ENCODE measurements at regions of chr1 and their contacts with region 1.

Region 1: DNA sequence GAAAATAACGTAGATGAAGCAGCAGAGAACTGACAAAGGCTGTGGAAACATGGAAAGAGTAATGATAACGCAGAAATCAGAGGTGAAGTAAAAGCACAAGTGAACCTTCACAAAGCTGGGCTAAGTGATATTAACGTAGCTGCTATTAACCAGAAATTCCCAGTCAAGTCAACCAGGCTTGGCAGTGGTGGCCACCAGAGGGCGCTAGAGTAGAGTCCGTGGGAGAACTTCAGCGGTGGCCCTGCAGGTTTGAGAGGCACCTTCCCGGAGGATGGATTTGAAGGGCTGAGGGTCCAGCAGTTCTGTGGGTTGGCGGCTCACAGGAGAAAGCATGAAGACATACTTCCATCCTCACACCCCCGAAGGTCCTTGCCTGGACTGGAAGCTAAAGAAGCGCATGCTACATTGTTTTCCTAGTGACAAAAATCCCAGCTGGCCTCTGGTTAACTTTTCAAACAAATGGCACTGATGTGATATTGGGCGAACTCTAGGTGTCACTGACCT is 81.7 kb upstream of the ZNF648 start:
- H3K4me3 ChIP-seq: no peak overlapping the region
- H3K27ac ChIP-seq: no peak overlapping the region
- H3K4me1 ChIP-seq: no peaks in the 10 kb centered on the region
- CTCF ChIP-seq: peak; percentile 84

Region 2: DNA sequence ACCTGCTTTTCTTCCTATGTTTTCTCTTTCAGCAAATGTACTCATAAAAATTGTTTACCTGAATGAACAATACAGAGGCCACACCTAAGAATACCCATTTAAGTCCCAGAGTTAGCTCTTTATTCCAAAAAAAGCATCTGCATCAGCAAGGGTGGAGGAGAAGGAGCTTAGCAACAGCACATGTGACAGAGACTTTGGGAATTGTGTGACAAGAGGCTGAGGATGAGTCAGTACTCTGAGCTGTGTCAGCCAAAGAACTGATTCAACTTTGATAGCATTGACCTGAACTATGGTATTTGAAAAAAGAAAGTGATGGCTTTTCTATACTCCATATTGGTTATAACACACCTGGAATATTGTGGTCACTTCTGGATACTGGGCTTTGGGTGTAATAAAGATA is 244.4 kb before region 1 on chr1:
- CTCF ChIA-PET with region 1: no interaction called
- POLR2A ChIA-PET with region 1: no interaction called
- H3K4me3 ChIP-seq: no peak overlapping the region
- H3K27ac ChIP-seq: no peak overlapping the region
- H3K4me1 ChIP-seq: no peaks in the 10 kb centered on the region
- CTCF ChIP-seq: no peak

Region 3: DNA sequence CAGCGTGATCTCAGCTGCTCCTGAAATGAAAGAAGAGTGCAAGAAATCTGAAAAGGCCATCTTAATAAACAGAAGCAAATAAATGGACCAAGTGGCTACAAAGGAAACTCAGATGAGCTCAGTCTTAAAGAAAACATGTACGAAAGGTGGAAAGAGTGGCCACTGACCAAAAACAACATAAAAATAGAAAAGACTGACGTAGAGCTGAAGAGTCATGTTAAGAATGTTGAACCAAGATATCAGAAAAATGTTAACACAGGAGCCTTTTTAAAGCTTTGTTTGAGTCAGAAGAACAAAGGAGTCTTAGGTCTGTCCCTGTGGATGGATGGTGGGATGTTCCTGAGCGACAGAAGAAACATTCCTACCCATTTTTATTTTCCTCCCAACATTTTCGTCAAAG is 50.9 kb before region 1 on chr1:
- CTCF ChIA-PET with region 1: interaction called, 12 read pairs
- POLR2A ChIA-PET with region 1: no interaction called
- H3K4me3 ChIP-seq: no peak overlapping the region
- H3K27ac ChIP-seq: no peak overlapping the region
- H3K4me1 ChIP-seq: no peaks in the 10 kb centered on the region
- CTCF ChIP-seq: no peak

Region 4: GRCh38 chr1:182122256-182122912 is 20.8 kb before region 1 on chr1:
- CTCF ChIA-PET with region 1: interaction called, 12 read pairs
- POLR2A ChIA-PET with region 1: no interaction called
- H3K4me3 ChIP-seq: no peak overlapping the region
- H3K27ac ChIP-seq: no peak overlapping the region
- H3K4me1 ChIP-seq: peaks cover 6% of the 10 kb centered on the region
- CTCF ChIP-seq: no peak

Region 5: GRCh38 chr1:182198049-182198501 is 54.9 kb after region 1 on chr1:
- CTCF ChIA-PET with region 1: interaction called, 39 read pairs
- POLR2A ChIA-PET with region 1: no interaction called
- H3K4me3 ChIP-seq: no peak overlapping the region
- H3K27ac ChIP-seq: no peak overlapping the region
- H3K4me1 ChIP-seq: no peaks in the 10 kb centered on the region
- CTCF ChIP-seq: no peak

Region 6: DNA sequence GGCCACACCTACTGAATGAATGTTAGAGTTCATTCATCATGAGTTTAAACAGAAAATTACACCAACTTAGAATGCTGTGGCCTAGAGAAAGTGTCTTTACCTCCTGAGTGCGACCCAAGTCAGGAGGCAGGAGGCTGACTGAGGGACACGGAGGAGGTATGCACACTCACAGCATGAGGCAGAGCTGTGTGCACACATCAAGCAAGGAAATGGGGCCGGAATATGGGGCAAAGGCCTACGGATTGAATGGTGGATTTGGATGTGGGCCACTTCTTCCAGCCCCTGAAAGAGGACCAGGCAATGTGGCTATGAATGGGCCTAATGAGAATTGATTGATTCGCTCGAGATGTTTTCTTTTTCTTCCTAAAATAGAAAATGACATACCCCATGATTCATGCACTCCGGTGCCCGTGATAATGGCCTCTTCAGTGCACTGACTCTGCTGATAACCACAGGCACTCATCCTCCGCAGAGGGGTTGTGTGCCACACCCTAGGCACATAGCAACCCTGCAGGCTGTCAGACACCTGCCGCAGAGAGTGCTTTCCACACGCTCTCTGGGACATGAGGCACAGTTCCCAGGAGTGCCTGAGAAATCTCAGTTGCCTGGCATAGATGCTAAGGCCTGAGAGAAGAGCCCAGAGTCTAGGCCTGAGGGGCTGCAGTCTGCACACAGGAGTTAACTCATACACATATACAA is 92.9 kb after region 1 on chr1:
- CTCF ChIA-PET with region 1: interaction called, 14 read pairs
- POLR2A ChIA-PET with region 1: no interaction called
- H3K4me3 ChIP-seq: no peak overlapping the region
- H3K27ac ChIP-seq: no peak overlapping the region
- H3K4me1 ChIP-seq: no peaks in the 10 kb centered on the region
- CTCF ChIP-seq: no peak

Region 7: DNA sequence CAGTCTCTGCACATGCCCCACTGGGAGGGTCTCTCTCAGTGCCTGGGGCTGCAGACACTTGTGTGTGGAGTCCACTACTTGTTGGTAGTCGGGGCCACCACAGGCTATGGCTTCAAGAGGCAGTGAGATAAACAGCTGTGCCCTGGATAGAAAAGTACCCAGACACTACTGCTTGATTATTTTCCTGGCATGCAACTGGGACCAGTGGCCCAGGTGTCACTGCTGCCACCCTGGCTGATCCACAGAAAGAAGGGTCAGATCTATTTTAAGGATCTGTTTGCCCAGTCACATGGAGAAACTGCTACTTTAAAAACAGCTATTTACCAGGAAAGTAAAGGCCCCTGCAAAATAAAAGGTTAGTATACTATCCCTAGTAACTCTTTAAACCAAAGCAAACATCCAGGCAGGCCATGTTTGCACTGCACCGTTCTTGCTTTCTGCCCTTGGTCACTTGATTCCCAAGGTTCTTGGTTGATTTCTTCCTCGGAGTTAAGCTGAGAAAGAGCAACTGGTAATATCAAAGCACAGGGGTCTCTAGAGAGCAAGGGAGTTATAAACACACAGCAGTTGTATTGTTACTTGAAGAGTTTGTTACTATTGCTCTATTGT is 148.5 kb after region 1 on chr1:
- CTCF ChIA-PET with region 1: no interaction called
- POLR2A ChIA-PET with region 1: no interaction called
- H3K4me3 ChIP-seq: no peak overlapping the region
- H3K27ac ChIP-seq: no peak overlapping the region
- H3K4me1 ChIP-seq: no peaks in the 10 kb centered on the region
- CTCF ChIP-seq: no peak

Region 8: DNA sequence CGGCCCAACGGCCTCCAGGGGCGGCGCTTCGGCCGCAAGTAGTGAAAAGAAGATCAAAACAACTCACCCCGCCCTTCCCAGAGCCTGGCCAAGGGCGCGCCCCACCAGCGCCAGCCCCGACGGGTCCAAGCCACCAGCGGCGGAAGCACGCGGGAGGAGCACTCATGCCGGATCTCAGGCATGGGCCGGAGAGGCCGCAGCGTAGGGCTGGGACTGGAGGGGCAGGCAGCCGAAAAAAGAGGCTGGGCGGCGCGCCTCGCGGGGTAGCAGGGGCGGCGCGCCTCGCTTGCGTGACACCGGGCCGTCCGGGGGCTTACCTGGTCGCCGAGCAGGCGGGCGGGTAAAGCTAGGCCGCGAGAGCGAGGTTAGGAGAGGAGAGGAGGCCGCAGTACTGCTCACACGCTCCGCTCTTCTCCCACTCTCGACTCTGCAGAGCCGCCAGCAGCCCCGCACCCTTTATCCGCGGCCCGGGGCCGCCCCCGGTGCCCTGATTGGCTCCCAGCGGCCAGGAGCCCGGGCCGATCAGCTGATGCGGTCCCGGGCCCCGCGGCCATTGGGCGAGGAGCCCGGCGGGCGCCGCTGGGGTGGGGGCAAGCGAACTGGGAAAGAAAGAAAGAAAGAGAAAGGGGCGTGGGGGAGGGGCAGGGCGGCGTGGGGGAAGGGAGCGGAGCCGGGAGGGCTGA is 248.3 kb after region 1 on chr1 and contains the start of gene GLUL:
- CTCF ChIA-PET with region 1: interaction called, 123 read pairs
- POLR2A ChIA-PET with region 1: interaction called, 28 read pairs
- H3K4me3 ChIP-seq: peak within 1 kb of the TSS; percentile 74
- H3K27ac ChIP-seq: peak within 1 kb of the TSS; percentile 89
- H3K4me1 ChIP-seq: no peaks in the 10 kb centered on the region
- CTCF ChIP-seq: peak; percentile 67

Region 9: DNA sequence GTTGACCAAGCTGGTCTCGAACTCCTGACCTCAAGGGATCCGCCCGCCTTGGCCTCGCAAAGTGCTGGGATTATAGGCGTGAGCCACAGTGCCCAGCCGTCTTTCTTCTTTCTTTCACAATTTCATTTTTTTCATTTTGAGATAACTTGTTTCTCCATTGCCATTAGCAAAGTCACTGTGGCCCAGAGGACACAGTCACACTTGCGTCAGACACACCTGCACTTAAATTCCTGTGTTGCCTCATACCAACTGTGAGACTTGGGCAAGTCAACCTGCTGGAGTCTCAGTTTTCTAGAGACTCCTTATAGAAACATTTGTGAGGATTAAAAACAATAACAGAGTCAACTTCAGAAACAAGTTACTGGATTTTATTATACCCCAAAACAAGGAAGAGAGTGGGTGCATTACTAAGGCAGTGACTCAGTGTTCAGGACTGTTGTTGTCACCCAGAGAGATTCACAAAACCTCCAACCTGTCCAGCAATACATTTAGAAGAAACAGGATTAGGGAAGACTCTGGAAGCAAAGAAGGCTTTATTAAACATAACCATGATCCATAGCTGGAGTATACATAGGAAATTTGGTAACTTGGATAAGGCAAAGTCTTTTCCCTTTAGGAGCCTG is 254.7 kb after region 1 on chr1:
- CTCF ChIA-PET with region 1: interaction called, 123 read pairs
- POLR2A ChIA-PET with region 1: interaction called, 28 read pairs
- H3K4me3 ChIP-seq: no peak overlapping the region
- H3K27ac ChIP-seq: no peak overlapping the region
- H3K4me1 ChIP-seq: peaks cover 4% of the 10 kb centered on the region; the same call in 1 of the 2 replicates
- CTCF ChIP-seq: no peak